ENCODE measurements at regions of chr7 and their contacts with region 1.

Region 1: GRCh38 chr7:138015096-138015495 is 13.2 kb upstream of the CREB3L2 start:
- DNase-seq: no peak
- ATAC-seq: no peak
- H3K4me3 ChIP-seq: no peak overlapping the region
- H3K27ac ChIP-seq: no peak overlapping the region
- H3K4me1 ChIP-seq: no peaks in the 10 kb centered on the region
- H3K27me3 ChIP-seq: no peaks in the 10 kb centered on the region
- CTCF ChIP-seq: no peak
- POLR2A ChIP-seq: no peak

Region 2: DNA sequence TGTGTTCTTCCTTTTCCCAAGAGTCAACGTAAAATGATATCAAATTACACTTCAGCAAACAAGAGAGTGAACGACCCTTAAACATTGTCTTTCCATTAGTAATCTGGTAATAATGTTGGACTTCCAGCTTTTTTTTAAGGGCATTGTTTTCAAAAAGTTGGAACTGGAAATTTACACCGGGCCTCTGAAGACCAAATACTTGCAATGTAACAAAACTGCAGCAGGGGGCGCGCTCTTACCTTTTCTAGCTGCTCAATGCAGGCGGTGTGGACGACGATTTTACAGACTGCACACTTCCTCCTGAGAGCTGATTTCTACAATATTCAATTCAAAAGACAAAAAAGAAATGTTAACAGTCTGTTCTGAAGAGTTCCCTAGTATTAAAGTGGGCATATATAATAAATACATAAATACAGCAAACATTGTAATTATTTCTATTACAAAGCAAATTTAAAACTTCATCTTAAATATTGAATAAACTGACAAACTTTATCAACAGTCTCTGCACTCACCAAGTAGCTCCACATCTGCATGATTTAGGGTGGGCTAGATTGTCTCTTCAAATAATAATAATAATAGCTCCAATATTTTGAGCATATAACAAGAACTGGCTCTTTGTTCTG is 358.8 kb before region 1 on chr7:
- in situ Hi-C with region 1: loop called (anchors 5 to 25 kb)
- intact Hi-C with region 1: loop called (anchors 5 kb)
- DNase-seq: peak; percentile 26 to 49
- ATAC-seq: peak; percentile 66 to 70
- H3K4me3 ChIP-seq: no peak overlapping the region
- H3K27ac ChIP-seq: no peak overlapping the region
- H3K4me1 ChIP-seq: peaks cover 0 to 8% of the 10 kb centered on the region in 2 donors
- H3K27me3 ChIP-seq: no peaks in the 10 kb centered on the region
- CTCF ChIP-seq: peak; percentile 44 to 74 (median 53)
- POLR2A ChIP-seq: no peak

Region 3: GRCh38 chr7:137753954-137754851 is 260.9 kb before region 1 on chr7:
- in situ Hi-C with region 1: no loop called
- intact Hi-C with region 1: no loop called
- DNase-seq: peak in 1 of 2 donors; percentile 14
- ATAC-seq: peak in 1 of 2 donors; percentile 61
- H3K4me3 ChIP-seq: no peak overlapping the region
- H3K27ac ChIP-seq: no peak overlapping the region
- H3K4me1 ChIP-seq: no peaks in the 10 kb centered on the region
- H3K27me3 ChIP-seq: no peaks in the 10 kb centered on the region
- CTCF ChIP-seq: no peak
- POLR2A ChIP-seq: no peak

Region 4: GRCh38 chr7:137909037-137909436 is 106.1 kb before region 1 on chr7:
- in situ Hi-C with region 1: loop called in 2 of 4 experiments (anchors 5 kb)
- intact Hi-C with region 1: no loop called
- DNase-seq: no peak
- ATAC-seq: no peak
- H3K4me3 ChIP-seq: no peak overlapping the region
- H3K27ac ChIP-seq: no peak overlapping the region
- H3K4me1 ChIP-seq: no peaks in the 10 kb centered on the region
- H3K27me3 ChIP-seq: no peaks in the 10 kb centered on the region
- CTCF ChIP-seq: no peak
- POLR2A ChIP-seq: no peak

Measured in gastrocnemius medialis (tissue), 4 donors.